WTC11 (cell line): ENCODE measurements at regions of chr9 and their contacts with region 1.

Region 1: GRCh38 chr9:117487555-117488175 is 72.8 kb upstream of the ASTN2 start:
- DNase-seq: peak; percentile 90
- ATAC-seq: peak; percentile 98
- H3K4me3 Mint-ChIP-seq: peak overlapping the region; percentile 42
- H3K27ac Mint-ChIP-seq: no peak overlapping the region
- H3K4me1 Mint-ChIP-seq: peaks cover 23% of the 10 kb centered on the region
- H3K27me3 Mint-ChIP-seq: peaks cover 5% of the 10 kb centered on the region
- CTCF ChIP-seq: peak; percentile 93

Region 2: DNA sequence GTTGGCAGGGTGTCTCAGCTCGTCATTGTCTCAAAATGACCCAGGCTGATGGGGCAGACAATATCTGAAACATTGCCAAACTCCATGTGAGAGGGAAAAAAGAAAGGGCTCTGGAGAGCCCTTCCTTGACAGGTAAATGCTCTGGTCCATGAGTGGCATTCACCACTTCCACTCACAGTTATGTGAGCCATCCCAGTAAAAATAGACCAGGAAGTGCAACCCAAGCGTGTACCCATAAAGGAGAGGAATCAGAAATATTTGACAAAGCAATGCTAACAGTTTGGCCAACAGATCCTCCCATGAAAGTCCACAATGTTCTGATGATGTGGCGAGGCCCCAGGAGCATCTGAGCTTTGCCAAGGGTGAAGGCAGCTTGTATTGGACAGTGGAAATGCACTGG is 122.2 kb before region 1 on chr9:
- CTCF ChIA-PET with region 1: no interaction called
- POLR2A ChIA-PET with region 1: no interaction called
- DNase-seq: no peak
- ATAC-seq: no peak
- H3K4me3 Mint-ChIP-seq: no peak overlapping the region
- H3K27ac Mint-ChIP-seq: no peak overlapping the region
- H3K4me1 Mint-ChIP-seq: peaks cover 20% of the 10 kb centered on the region
- H3K27me3 Mint-ChIP-seq: no peaks in the 10 kb centered on the region
- CTCF ChIP-seq: no peak

Region 3: DNA sequence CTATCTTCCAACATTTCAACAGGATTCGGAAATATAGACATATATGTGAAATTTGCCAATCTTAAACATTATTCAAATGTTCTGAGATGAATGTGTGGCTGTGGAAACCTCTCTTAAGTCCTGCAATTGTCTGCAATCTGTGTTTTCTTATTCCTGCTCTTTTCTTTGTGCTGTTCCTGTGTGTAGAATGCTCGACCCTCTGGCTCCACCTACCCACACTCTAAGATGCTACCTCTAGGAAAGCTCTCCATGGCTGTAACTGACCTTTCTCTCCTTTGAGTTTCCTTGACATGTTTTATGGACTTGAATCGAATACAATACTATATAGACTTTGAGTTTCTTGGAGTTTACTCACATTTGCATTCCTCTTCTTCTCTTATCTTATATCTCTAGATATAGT is 47.8 kb after region 1 on chr9:
- CTCF ChIA-PET with region 1: interaction called, 39 read pairs
- POLR2A ChIA-PET with region 1: no interaction called
- DNase-seq: no peak
- ATAC-seq: peak; percentile 99
- H3K4me3 Mint-ChIP-seq: no peak overlapping the region
- H3K27ac Mint-ChIP-seq: no peak overlapping the region
- H3K4me1 Mint-ChIP-seq: peaks cover 9% of the 10 kb centered on the region
- H3K27me3 Mint-ChIP-seq: no peaks in the 10 kb centered on the region; the same call in 1 of the 2 replicates
- CTCF ChIP-seq: no peak

Region 4: GRCh38 chr9:117546894-117547678 is 59.4 kb after region 1 on chr9:
- CTCF ChIA-PET with region 1: interaction called, 23 read pairs
- POLR2A ChIA-PET with region 1: no interaction called
- DNase-seq: no peak
- ATAC-seq: 0 out of 2 replicates have a peak, but pooled peaks have one; percentile 5
- H3K4me3 Mint-ChIP-seq: peak overlapping the region; percentile 38
- H3K27ac Mint-ChIP-seq: no peak overlapping the region
- H3K4me1 Mint-ChIP-seq: peaks cover 62% of the 10 kb centered on the region
- H3K27me3 Mint-ChIP-seq: no peaks in the 10 kb centered on the region
- CTCF ChIP-seq: no peak

Region 5: DNA sequence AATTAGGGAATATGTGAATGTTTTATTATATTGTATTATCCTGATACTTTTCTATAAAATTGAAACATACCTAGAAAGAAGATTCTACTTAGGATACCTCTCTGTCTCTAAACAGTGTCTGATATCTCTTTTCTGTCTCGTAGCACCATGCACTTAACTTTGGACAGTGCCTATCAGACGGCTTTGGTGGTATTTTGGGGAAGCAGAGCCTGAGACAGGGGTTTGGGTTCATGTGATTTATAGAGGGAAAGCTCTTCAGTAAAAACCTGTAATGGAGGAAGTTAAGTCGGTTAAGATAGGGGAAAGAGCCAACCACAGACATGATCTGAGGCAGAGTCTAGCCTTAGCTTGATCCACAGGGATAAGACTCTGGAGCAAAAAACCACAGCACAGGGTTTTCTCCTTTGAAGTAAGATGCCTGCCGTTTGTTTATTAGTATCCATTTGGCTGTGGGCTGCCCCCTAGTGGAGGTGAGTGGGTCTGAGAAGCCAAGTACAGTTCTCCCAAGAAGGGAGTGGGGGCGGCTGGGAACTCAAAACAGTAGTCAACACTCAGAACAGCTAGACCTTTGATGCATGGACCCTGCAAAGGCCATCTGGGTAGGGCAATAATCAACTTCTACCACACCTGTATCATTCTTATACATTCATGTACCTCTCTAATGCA is 68.4 kb after region 1 on chr9:
- CTCF ChIA-PET with region 1: interaction called, 23 read pairs
- POLR2A ChIA-PET with region 1: no interaction called
- DNase-seq: peak; percentile 83
- ATAC-seq: peak; percentile 99
- H3K4me3 Mint-ChIP-seq: no peak overlapping the region
- H3K27ac Mint-ChIP-seq: no peak overlapping the region
- H3K4me1 Mint-ChIP-seq: peaks cover 6% of the 10 kb centered on the region
- H3K27me3 Mint-ChIP-seq: no peaks in the 10 kb centered on the region
- CTCF ChIP-seq: peak; percentile 72